Activated naive CD4-positive, alpha-beta T cell treated with anti-CD3 and anti-CD28 coated beads for 36 hours (primary cell): ENCODE measurements at regions of chr9 and their contacts with region 1.

Region 1: GRCh38 chr9:85741875-85742629 is at the start of gene AGTPBP1:
- DNase-seq: peak; percentile 95
- H3K4me3 Mint-ChIP-seq: peak within 1 kb of the TSS; percentile 83
- H3K27ac Mint-ChIP-seq: peak within 1 kb of the TSS; percentile 94
- H3K4me1 Mint-ChIP-seq: peaks cover 30% of the 10 kb centered on the region
- H3K27me3 Mint-ChIP-seq: peaks cover 6% of the 10 kb centered on the region
- total RNA-seq, gene AGTPBP1: 37.6 to 39.0 TPM

Region 2: DNA sequence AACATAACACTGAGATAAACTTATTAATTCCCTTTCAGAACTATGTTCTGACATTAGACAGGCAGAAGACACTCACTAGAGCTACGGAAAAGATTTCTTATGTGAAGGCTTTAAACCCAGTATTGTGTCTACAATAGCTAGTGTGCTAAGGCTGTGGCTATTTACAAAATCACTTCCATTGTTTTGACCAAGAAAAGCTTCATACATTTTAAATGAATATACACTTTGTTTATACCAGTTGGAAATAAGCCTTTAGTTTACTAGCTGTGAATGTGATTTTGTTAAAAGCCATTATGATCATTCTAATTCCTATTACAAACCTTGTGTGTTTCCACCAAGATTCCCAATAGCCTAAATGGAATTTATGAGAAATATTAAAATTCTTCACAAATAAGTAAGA is 83.3 kb before region 1 on chr9:
- CTCF ChIA-PET with region 1: no interaction called
- intact Hi-C with region 1: no loop called
- DNase-seq: no peak
- H3K4me3 Mint-ChIP-seq: no peak overlapping the region
- H3K27ac Mint-ChIP-seq: no peak overlapping the region
- H3K4me1 Mint-ChIP-seq: no peaks in the 10 kb centered on the region
- H3K27me3 Mint-ChIP-seq: no peaks in the 10 kb centered on the region

Region 3: DNA sequence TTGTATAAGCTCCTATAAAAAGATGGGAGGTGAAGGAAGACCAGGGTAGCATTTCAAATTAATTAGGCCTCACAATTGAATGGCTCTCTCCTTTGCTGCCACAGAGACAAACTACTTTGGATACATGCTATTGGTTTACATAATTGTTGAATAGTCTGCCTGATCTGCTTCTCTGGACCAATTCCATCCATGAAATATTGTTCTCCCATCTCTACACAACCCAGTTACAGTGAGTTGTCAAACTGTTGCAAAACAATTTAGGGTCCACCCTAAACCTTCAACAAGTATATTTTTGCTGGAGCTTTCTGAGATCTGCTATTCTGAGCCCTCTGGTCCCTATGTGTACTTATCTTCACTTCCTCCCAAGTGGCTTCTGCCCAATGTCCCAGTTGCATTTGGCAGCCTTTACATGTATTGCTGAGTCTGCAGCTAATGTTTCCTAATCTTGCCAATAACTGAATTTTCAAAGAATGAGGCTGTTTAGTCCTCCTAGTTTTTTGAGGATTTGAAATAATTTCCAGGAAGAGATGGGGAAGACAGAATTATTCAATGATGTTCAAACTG is 39.2 kb before region 1 on chr9:
- CTCF ChIA-PET with region 1: interaction called, 3 read pairs
- intact Hi-C with region 1: loop called (anchors 1 kb)
- DNase-seq: no peak
- H3K4me3 Mint-ChIP-seq: no peak overlapping the region
- H3K27ac Mint-ChIP-seq: no peak overlapping the region
- H3K4me1 Mint-ChIP-seq: peaks cover 31% of the 10 kb centered on the region
- H3K27me3 Mint-ChIP-seq: no peaks in the 10 kb centered on the region

Region 4: GRCh38 chr9:85726737-85727136 is 15.3 kb before region 1 on chr9:
- CTCF ChIA-PET with region 1: interaction called, 3 read pairs
- intact Hi-C with region 1: loop called (anchors 1 kb)
- DNase-seq: no peak
- H3K4me3 Mint-ChIP-seq: no peak overlapping the region
- H3K27ac Mint-ChIP-seq: no peak overlapping the region
- H3K4me1 Mint-ChIP-seq: peaks cover 66% of the 10 kb centered on the region
- H3K27me3 Mint-ChIP-seq: no peaks in the 10 kb centered on the region